ENCODE measurements at regions of chr10 and their contacts with region 1.

Region 1: GRCh38 chr10:91298224-91298871 is 77.9 kb downstream of the PCGF5 start:
- DNase-seq: peak; percentile 72 to 85
- ATAC-seq: peak; percentile 94 to 97 (median 96)
- H3K4me3 ChIP-seq: peak overlapping the region; percentile 66
- H3K27ac ChIP-seq: peak overlapping the region; percentile 66
- H3K4me1 ChIP-seq: peaks cover 8% of the 10 kb centered on the region
- H3K27me3 ChIP-seq: no peaks in the 10 kb centered on the region
- CTCF ChIP-seq: peak; percentile 96

Region 2: DNA sequence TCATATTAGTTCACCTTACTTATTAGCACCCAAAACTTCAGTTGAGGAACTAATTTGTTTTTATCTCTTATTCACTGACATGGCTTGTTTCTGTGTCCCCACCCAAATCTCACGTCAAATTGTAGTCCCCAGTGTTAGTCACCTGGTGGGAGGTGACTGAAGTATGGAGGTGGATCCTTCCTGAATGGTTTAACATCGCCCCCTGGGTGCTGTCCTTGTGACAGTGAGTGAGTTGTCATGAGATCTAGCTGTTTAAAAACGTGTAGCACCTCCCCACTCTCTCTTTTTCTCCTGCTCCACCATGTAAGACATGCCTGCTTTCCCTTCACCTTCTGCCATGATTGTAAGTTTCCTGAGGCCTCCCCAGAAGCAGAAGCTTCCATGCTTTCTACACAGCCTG is 36.8 kb after region 1 on chr10:
- intact Hi-C with region 1: loop called in 1 of 2 experiments (anchors 5 kb)
- DNase-seq: no peak
- ATAC-seq: no peak
- H3K4me3 ChIP-seq: no peak overlapping the region
- H3K27ac ChIP-seq: no peak overlapping the region
- H3K4me1 ChIP-seq: peaks cover under 1% of the 10 kb centered on the region
- H3K27me3 ChIP-seq: no peaks in the 10 kb centered on the region
- CTCF ChIP-seq: no peak

Region 3: DNA sequence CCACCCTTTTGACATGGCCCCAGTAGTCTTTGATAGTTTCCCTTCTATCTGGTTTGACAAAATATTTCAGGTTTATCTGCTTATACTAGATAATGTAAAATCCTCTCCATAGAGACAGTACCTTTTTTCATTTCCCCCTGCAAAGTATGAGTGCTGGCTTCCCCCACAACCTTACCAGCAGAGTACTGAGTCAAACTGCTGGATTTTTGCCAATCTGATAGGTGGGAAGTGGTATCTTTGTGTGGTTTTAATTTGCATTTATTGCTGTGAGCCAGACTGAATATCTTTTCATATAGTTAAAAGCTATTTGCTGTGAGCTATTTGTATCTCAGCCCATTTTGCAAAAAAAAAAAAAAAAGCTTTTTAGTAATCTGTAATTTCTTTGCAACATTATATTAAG is 79.7 kb after region 1 on chr10:
- intact Hi-C with region 1: loop called in 1 of 2 experiments (anchors 5 kb)
- DNase-seq: no peak
- ATAC-seq: no peak
- H3K4me3 ChIP-seq: no peak overlapping the region
- H3K27ac ChIP-seq: no peak overlapping the region
- H3K4me1 ChIP-seq: no peaks in the 10 kb centered on the region
- H3K27me3 ChIP-seq: no peaks in the 10 kb centered on the region
- CTCF ChIP-seq: no peak

Region 4: GRCh38 chr10:91409869-91410637 is 111.7 kb after region 1 on chr10 and contains the start of gene HECTD2:
- intact Hi-C with region 1: loop called in 1 of 2 experiments (anchors 1 kb)
- DNase-seq: peak; percentile 86 to 91
- ATAC-seq: peak; percentile 82 to 85 (median 84)
- H3K4me3 ChIP-seq: peak within 1 kb of the TSS; percentile 97
- H3K27ac ChIP-seq: peak within 1 kb of the TSS; percentile 100
- H3K4me1 ChIP-seq: peaks cover 35% of the 10 kb centered on the region
- H3K27me3 ChIP-seq: no peaks in the 10 kb centered on the region
- CTCF ChIP-seq: peak; percentile 62
- total RNA-seq, gene HECTD2: 5.9 to 15.0 (median 10.8) TPM

Region 5: DNA sequence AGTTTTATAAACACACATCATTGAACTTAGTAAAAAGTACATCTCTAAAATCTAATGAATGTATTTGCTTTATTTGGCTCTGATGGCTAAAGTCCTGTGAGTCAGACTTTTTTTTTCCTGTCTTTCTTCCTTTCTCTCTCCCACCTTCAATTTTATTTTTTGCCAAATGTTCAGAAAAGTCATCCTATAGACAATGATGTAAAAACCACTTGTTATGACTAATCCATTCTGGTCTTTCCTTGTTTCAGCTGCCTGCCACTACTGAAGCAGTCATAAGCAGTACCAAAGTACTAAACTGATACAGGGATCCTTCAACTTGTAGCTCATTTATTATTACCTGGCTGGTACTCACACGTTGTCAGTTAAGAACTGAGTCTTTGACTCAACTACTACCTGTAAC is 135.7 kb after region 1 on chr10:
- intact Hi-C with region 1: no loop called
- DNase-seq: no peak
- ATAC-seq: no peak
- H3K4me3 ChIP-seq: no peak overlapping the region
- H3K27ac ChIP-seq: no peak overlapping the region
- H3K4me1 ChIP-seq: peaks cover 12% of the 10 kb centered on the region
- H3K27me3 ChIP-seq: no peaks in the 10 kb centered on the region
- CTCF ChIP-seq: no peak

Region 6: GRCh38 chr10:91444211-91445182 is 146.1 kb after region 1 on chr10:
- intact Hi-C with region 1: no loop called
- DNase-seq: no peak
- ATAC-seq: peak; percentile 44 to 95 (median 65)
- H3K4me3 ChIP-seq: no peak overlapping the region
- H3K27ac ChIP-seq: peak overlapping the region; percentile 57
- H3K4me1 ChIP-seq: peaks cover 14% of the 10 kb centered on the region
- H3K27me3 ChIP-seq: no peaks in the 10 kb centered on the region
- CTCF ChIP-seq: no peak

Region 7: GRCh38 chr10:91632671-91633550 is 334.6 kb after region 1 on chr10 and contains the start of gene PPP1R3C:
- intact Hi-C with region 1: loop called (anchors 5 kb)
- DNase-seq: peak; percentile 92 to 97
- ATAC-seq: peak; percentile 84 to 96 (median 88)
- H3K4me3 ChIP-seq: peak within 1 kb of the TSS; percentile 70
- H3K27ac ChIP-seq: peak within 1 kb of the TSS; percentile 92
- H3K4me1 ChIP-seq: peaks cover 7% of the 10 kb centered on the region
- H3K27me3 ChIP-seq: no peaks in the 10 kb centered on the region
- CTCF ChIP-seq: peak; percentile 30
- total RNA-seq, gene PPP1R3C: 89.6 to 359 (median 280) TPM

Measured in psoas muscle (tissue), 8 donors.